GM10248 (cell line): ENCODE measurements at regions of chr9 and their contacts with region 1.

Region 1: DNA sequence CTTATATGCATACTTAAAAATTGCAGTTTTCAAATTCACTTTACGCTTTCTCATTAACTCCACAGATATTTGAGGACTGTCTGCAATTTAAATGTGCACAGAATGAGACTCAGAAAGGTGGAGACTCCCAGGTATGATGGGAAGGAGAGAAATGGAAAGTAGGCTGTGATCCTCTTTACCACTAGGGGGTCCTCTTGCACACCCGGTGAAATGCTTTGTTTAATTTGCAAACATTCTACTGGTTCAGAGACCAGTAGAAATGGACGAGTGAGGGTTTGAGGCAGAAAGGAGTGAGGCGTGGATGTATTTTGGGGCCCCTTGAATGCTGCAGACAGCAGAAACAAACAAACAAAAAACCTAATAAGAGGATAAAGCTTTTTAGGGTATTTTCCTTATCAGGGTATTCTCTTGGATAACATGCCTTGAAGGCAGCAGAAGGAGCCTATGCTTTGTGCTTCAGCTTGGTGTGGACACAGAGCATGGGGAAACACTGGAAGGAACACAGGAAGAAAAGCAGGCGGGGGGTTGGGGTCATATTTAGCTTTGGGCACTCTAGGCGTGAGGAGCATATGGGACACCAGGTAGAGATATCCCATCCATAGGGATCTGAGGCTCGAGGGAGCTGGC is 410.1 kb downstream of the DMRT2 start:
- DNase-seq: peak; percentile 43
- CTCF ChIP-seq: peak; percentile 63

Region 2: DNA sequence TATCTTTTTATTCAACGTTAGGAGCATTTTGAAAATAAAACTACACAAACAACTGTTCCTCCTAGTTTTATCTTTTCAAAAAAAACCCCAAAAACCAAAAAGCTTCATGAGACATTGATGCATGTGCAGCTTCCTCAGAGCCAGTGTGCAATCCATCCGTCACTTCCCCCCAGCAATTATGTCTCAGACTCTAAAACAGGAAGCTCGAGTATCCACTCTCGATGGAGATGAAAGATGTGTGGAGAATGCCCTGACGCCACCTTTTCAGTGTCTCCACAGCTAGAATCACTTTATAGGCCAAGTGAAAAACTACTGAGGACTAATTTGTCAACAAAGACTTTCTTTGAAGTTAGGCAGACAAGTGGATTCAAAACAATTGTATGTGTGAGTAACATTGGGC is 146.0 kb after region 1 on chr9:
- CTCF ChIA-PET with region 1: interaction called, 14 read pairs
- POLR2A ChIA-PET with region 1: no interaction called
- DNase-seq: no peak
- CTCF ChIP-seq: no peak